CD4-positive, alpha-beta memory T cell (primary cell): ENCODE measurements at regions of chr3 and their contacts with region 1.

Region 1: DNA sequence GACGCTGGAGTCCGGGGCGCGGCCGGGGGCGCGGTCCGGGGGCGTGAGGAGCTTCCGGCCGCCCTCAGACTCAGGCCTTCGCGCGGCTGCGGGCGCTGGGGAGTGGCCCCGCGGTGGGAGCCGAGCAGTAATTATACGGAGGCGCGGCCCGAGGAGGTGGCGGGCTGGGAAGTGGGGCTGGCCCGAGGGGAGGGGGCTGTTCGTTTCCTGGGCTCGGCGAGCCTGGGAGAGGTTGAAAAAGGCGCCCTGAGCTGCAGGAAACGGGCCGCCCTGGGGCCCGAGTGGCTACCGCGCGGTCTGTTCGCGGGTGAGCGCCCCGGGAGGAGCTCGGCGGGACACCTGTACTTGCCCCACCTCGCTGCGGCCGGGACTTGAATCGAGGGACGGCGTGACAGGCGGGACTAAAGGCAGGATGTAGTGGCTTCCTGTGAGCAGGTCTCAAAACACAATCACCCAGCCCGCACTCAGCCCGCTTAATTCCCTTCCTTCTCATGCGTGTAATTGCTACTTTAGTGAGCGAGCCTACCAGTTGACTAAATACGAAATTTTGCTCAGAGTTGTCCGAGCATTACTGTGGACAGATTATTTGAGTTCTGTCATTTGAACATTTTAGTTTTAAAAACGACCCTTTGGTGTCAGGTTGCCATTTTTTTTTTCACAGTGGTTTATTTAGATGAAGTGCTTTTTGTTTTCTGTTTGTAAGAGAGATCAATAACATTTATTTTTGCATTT is 860 bp downstream of the RASA2 start:
- DNase-seq: peak; percentile 87 to 94 (median 89)
- H3K4me3 ChIP-seq: peak overlapping the region; percentile 48 to 60
- H3K4me3 Mint-ChIP-seq: peak overlapping the region; percentile 87 to 97 (median 94)
- H3K27ac ChIP-seq: peak overlapping the region; percentile 91
- H3K27ac Mint-ChIP-seq: peak overlapping the region; percentile 72 to 99 (median 95)
- H3K4me1 ChIP-seq: peaks cover 64% of the 10 kb centered on the region
- H3K4me1 Mint-ChIP-seq: peaks cover 59 to 75% (median 65%) of the 10 kb centered on the region in 4 donors
- H3K27me3 ChIP-seq: no peaks in the 10 kb centered on the region
- H3K27me3 Mint-ChIP-seq: no peaks in the 10 kb centered on the region

Region 2: DNA sequence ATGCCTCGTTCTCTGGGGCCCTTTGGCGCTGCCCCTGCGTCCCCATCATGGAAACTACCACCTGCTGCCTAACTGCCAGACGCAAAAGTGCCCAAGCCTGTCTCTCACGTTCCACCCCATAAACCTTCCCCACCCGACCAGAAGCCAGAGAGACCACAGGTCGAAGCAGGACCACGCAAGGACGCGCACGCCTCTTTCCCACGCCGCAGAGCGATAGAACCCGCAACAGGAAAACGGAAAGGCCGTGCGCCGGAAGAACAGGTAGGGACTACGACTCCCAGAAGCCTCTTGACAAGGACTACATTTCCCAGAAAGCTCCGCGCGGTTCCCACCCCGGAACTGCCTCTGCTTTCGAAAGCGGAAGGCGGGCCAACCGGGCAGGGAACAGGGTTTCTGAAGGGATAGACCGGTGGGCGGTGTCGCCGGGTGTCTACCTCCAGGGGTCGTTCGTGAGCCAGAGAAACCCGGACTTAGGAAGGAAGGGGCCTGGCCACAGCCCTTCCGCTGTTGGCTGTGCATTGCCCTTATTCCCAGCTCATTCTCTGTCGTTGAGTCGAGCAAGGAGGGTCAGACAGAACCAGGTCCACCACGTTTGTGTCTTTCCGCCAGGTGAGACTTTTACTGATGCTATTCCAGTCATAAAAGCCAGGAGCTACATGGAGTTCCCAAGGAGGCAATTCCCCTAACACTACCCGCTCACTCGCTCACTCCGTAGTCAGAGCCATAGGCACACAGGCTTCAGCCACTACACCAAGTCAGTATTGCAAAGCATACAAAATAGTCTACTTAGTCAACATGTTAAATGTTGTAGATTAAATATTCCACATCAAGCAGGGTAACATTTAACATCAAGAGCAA is 176.0 kb before region 1 on chr3:
- CTCF ChIA-PET with region 1: interaction called, 3 read pairs
- POLR2A ChIA-PET with region 1: interaction called, 8 read pairs
- intact Hi-C with region 1: loop called (anchors 1 kb)
- DNase-seq: peak; percentile 97 to 99 (median 98)
- H3K4me3 ChIP-seq: peak overlapping the region; percentile 68 to 73
- H3K4me3 Mint-ChIP-seq: peak overlapping the region; percentile 92 to 100 (median 98)
- H3K27ac ChIP-seq: peak overlapping the region; percentile 66
- H3K27ac Mint-ChIP-seq: peak overlapping the region; percentile 89 to 99 (median 97)
- H3K4me1 ChIP-seq: peaks cover 46% of the 10 kb centered on the region
- H3K4me1 Mint-ChIP-seq: peaks cover 32 to 60% (median 49%) of the 10 kb centered on the region in 4 donors
- H3K27me3 ChIP-seq: no peaks in the 10 kb centered on the region
- H3K27me3 Mint-ChIP-seq: no peaks in the 10 kb centered on the region

Region 3: GRCh38 chr3:141477224-141477623 is 10.5 kb before region 1 on chr3:
- CTCF ChIA-PET with region 1: interaction called, 5 read pairs
- POLR2A ChIA-PET with region 1: interaction called, 5 read pairs
- intact Hi-C with region 1: loop called (anchors 1 kb)
- DNase-seq: no peak
- H3K4me3 ChIP-seq: no peak overlapping the region
- H3K4me3 Mint-ChIP-seq: no peak overlapping the region
- H3K27ac ChIP-seq: no peak overlapping the region
- H3K27ac Mint-ChIP-seq: peak overlapping the region in 1 of 7 donors; percentile 57
- H3K4me1 ChIP-seq: peaks cover 23% of the 10 kb centered on the region
- H3K4me1 Mint-ChIP-seq: peaks cover 13 to 38% (median 26%) of the 10 kb centered on the region in 4 donors
- H3K27me3 ChIP-seq: no peaks in the 10 kb centered on the region
- H3K27me3 Mint-ChIP-seq: no peaks in the 10 kb centered on the region

Region 4: GRCh38 chr3:141523615-141524375 is 36.1 kb after region 1 on chr3:
- CTCF ChIA-PET with region 1: interaction called, 4 read pairs
- POLR2A ChIA-PET with region 1: interaction called, 37 read pairs
- intact Hi-C with region 1: no loop called
- DNase-seq: no peak
- H3K4me3 ChIP-seq: no peak overlapping the region
- H3K4me3 Mint-ChIP-seq: peak overlapping the region in 2 of 8 donors; percentile 13 to 44
- H3K27ac ChIP-seq: no peak overlapping the region
- H3K27ac Mint-ChIP-seq: peak overlapping the region in 5 of 7 donors; percentile 29 to 84 (median 52)
- H3K4me1 ChIP-seq: peaks cover 66% of the 10 kb centered on the region
- H3K4me1 Mint-ChIP-seq: peaks cover 51 to 87% (median 70%) of the 10 kb centered on the region in 4 donors
- H3K27me3 ChIP-seq: no peaks in the 10 kb centered on the region
- H3K27me3 Mint-ChIP-seq: no peaks in the 10 kb centered on the region

Region 5: GRCh38 chr3:141553055-141553454 is 65.4 kb after region 1 on chr3:
- CTCF ChIA-PET with region 1: interaction called, 9 read pairs
- POLR2A ChIA-PET with region 1: interaction called, 95 read pairs
- intact Hi-C with region 1: loop called (anchors 1 kb)
- DNase-seq: peak; percentile 68 to 84 (median 78)
- H3K4me3 ChIP-seq: no peak overlapping the region
- H3K4me3 Mint-ChIP-seq: peak overlapping the region in 7 of 8 donors; percentile 6 to 79 (median 57)
- H3K27ac ChIP-seq: no peak overlapping the region
- H3K27ac Mint-ChIP-seq: peak overlapping the region; percentile 77 to 91 (median 85)
- H3K4me1 ChIP-seq: peaks cover 65% of the 10 kb centered on the region
- H3K4me1 Mint-ChIP-seq: peaks cover 46 to 58% (median 52%) of the 10 kb centered on the region in 4 donors
- H3K27me3 ChIP-seq: no peaks in the 10 kb centered on the region
- H3K27me3 Mint-ChIP-seq: no peaks in the 10 kb centered on the region

Region 6: DNA sequence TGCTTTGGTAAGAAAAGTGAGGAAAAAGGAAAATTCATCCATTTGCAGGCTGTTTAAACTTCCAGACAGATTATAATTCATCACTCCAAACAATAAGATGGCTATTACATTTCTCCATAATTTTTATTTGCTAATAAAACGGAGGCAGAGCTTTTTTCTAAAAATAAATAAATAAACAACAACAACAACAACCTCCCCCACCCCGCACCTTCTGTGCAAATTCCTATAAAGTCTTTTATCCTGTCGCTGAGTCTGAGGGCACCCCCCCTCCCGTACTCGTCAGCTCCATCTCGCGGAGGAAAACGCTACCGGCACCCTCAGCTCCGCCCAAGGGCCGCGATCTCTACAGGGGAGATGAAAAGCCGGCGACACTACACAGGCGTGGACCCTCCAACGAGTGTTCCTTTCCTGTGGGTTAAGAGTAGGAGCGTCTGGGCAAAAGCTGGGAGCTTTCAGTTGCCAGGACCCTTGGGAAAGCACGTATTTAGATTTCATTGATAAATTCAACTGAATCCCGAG is 387.7 kb after region 1 on chr3:
- CTCF ChIA-PET with region 1: no interaction called
- POLR2A ChIA-PET with region 1: interaction called, 14 read pairs
- intact Hi-C with region 1: no loop called
- DNase-seq: peak; percentile 75 to 84 (median 78)
- H3K4me3 ChIP-seq: peak overlapping the region; percentile 82 to 86
- H3K4me3 Mint-ChIP-seq: peak overlapping the region; percentile 85 to 96 (median 92)
- H3K27ac ChIP-seq: peak overlapping the region; percentile 95
- H3K27ac Mint-ChIP-seq: peak overlapping the region; percentile 93 to 99 (median 95)
- H3K4me1 ChIP-seq: peaks cover 28% of the 10 kb centered on the region
- H3K4me1 Mint-ChIP-seq: peaks cover 19 to 39% (median 30%) of the 10 kb centered on the region in 4 donors
- H3K27me3 ChIP-seq: no peaks in the 10 kb centered on the region
- H3K27me3 Mint-ChIP-seq: peaks cover 0 to 1% of the 10 kb centered on the region in 2 donors